Activated naive CD4-positive, alpha-beta T cell treated with anti-CD3 and anti-CD28 coated beads for 36 hours (primary cell): ENCODE measurements at regions of chr1 and their contacts with region 1.

Region 1: DNA sequence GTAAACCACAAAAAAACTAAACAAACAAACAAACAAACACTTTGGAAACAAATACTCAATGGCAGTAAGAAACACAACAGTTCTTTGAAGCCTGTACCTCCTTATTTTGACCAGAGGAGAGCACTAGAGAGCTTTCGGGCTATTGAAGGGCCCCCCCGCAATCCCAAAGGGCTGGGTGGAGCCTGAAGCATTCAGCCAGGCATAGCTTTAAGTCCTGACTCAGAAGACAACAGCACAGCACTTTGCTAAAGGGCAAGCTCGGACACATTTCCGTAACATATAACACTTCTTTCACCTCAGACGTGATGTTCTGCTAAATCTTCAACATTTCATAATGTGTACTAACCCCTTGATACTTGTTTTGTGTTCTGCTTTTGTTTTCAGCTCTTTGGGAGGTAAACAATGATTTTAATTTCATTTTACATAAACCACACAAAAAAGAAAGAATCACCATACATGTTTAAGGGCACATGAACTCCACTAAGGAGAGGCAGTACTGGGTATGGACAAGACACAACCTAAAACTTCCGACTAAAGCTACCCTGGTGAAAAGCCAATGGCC is 9.7 kb upstream of the SHCBP1L start:
- DNase-seq: peak; percentile 64
- H3K4me3 Mint-ChIP-seq: no peak overlapping the region
- H3K27ac Mint-ChIP-seq: no peak overlapping the region
- H3K4me1 Mint-ChIP-seq: peaks cover 4% of the 10 kb centered on the region
- H3K27me3 Mint-ChIP-seq: peaks cover 10% of the 10 kb centered on the region

Region 2: DNA sequence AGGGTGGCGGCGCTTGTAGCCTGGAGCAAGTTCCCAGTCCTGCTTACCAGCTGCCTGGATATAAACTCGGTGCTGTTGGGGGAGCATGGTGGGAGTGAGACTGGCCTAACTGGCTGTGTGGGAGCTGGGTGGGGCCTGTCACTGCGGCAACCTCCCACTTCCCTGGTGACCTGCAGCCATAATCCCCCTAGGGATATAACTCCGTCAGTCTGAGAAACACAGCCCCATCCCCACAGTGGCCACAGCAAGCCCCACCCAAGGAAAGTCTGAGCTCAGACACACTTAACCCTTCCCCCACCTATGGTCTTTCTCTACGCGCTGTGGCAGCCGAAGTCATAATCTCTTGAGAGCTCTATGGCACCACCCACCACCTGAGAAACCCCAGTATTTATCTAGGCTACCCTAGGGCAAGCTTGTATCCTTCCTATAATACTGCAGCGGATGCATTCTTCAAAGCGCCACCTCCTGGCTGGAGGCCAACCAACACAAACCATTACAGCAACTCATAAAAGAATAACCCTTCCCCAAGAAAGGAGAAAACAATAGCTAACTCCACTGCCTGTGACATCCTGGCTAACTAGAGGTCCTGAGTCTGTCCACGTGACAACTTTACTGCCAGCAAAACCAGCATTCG is 958.6 kb before region 1 on chr1:
- CTCF ChIA-PET with region 1: no interaction called
- intact Hi-C with region 1: no loop called
- DNase-seq: no peak
- H3K4me3 Mint-ChIP-seq: no peak overlapping the region
- H3K27ac Mint-ChIP-seq: no peak overlapping the region
- H3K4me1 Mint-ChIP-seq: peaks cover 5% of the 10 kb centered on the region
- H3K27me3 Mint-ChIP-seq: peaks cover 6% of the 10 kb centered on the region

Region 3: GRCh38 chr1:183023601-183024316 is 61.1 kb after region 1 on chr1:
- CTCF ChIA-PET with region 1: no interaction called
- intact Hi-C with region 1: loop called (anchors 2 kb)
- DNase-seq: peak; percentile 60
- H3K4me3 Mint-ChIP-seq: peak overlapping the region; percentile 70
- H3K27ac Mint-ChIP-seq: no peak overlapping the region
- H3K4me1 Mint-ChIP-seq: peaks cover 11% of the 10 kb centered on the region
- H3K27me3 Mint-ChIP-seq: peaks cover 68% of the 10 kb centered on the region

Region 4: GRCh38 chr1:183227963-183228649 is 265.5 kb after region 1 on chr1:
- CTCF ChIA-PET with region 1: interaction called, 7 read pairs
- intact Hi-C with region 1: loop called (anchors 1 kb)
- DNase-seq: peak; percentile 66
- H3K4me3 Mint-ChIP-seq: no peak overlapping the region
- H3K27ac Mint-ChIP-seq: no peak overlapping the region
- H3K4me1 Mint-ChIP-seq: peaks cover 5% of the 10 kb centered on the region
- H3K27me3 Mint-ChIP-seq: no peaks in the 10 kb centered on the region

Region 5: GRCh38 chr1:183318433-183318832 is 355.8 kb after region 1 on chr1:
- CTCF ChIA-PET with region 1: no interaction called
- intact Hi-C with region 1: loop called (anchors 10 kb)
- DNase-seq: peak; percentile 31
- H3K4me3 Mint-ChIP-seq: no peak overlapping the region
- H3K27ac Mint-ChIP-seq: no peak overlapping the region
- H3K4me1 Mint-ChIP-seq: no peaks in the 10 kb centered on the region
- H3K27me3 Mint-ChIP-seq: peaks cover 10% of the 10 kb centered on the region

Region 6: DNA sequence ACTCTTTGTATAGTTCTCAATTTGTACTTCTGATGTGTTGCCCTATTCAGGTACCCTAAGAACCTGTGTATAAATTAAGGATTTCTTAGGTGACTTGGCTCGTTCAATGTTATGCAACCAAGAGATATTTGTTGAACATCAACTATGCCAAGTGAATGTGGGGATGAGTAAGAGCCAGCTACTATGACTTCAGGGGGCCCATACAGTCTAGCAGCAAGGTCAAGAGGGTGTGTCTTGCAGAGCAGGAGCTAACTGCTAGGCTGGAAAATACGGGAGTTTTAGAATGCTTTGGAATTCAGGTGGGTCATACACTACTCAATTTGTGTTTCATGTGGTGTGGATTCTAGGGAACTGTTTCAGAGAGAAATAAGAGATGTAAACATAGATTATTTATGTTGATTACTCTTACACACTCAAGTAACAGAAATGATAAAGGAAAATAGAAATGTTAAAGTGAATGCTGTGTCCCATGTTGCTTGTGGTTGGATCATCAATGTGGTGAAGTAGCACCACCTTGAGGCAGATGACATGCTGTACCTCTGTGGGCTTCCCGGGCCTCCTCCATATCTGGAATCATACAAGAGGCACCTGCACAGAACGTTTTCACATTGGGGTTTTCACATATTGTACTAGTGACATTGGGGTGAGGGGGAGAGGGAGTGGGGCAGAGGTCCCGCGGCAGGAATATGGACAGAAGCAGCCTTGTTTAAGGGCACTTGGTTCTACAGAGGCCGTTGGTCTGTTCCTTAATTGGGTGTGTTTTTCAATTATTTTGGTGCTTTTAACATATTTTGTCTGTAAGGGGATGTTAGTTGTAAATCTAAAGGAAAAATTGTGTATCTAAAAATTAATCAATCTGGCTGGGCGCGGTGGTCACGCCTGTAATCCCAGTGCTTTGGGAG is 660.5 kb after region 1 on chr1:
- CTCF ChIA-PET with region 1: no interaction called
- intact Hi-C with region 1: loop called (anchors 1 kb)
- DNase-seq: peak; percentile 78
- H3K4me3 Mint-ChIP-seq: no peak overlapping the region
- H3K27ac Mint-ChIP-seq: peak overlapping the region; percentile 37
- H3K4me1 Mint-ChIP-seq: peaks cover 14% of the 10 kb centered on the region
- H3K27me3 Mint-ChIP-seq: no peaks in the 10 kb centered on the region